ENCODE measurements at regions of chr11 and their contacts with region 1.

Region 1: DNA sequence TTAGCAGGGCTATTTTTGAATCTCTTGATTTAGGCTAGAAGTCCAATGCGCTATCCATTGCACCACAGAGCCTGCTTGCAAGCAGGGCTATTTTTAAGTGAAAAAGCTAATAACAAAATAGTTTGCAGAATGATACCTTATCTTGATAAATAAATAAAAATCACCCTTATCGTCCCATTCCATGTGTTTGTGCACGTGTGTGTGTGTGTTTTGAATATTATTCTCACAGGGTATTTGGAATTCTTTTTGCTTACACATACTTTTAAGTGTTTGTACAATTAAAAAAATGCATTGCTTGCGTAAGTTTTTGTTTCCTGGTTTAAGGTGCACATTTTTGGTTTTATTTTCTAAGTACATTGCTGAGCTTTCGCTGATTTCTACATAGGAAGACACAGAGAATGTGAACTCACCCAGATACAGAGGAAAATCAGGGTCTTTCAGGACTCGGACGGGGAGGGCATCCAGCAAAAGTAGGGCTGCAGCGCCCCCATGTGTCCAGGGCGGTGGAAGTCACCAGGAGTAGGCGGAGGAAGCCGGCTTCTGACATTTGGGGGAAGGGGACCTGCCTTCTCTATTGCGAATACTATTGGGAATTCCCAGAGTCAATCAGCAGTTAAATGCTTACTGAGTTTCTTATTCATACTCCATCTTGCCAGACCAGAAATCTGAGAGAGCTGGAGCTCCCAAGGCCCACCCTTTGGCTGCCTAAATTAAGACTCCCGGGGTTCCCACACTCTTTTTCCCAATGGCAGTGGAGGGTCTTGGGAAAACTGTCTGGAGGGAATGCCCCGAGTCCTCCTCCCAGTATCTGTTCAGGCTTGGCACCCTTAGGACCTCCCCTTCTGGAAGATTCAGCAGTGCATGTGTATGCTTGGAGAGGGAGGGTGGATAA is 27.2 kb downstream of the SLC1A2 start:
- DNase-seq: peak; percentile 76
- H3K4me3 Mint-ChIP-seq: peak overlapping the region; percentile 62
- H3K27ac Mint-ChIP-seq: no peak overlapping the region
- H3K4me1 Mint-ChIP-seq: peaks cover 15% of the 10 kb centered on the region
- H3K27me3 Mint-ChIP-seq: no peaks in the 10 kb centered on the region
- CTCF ChIP-seq: peak; percentile 96

Region 2: DNA sequence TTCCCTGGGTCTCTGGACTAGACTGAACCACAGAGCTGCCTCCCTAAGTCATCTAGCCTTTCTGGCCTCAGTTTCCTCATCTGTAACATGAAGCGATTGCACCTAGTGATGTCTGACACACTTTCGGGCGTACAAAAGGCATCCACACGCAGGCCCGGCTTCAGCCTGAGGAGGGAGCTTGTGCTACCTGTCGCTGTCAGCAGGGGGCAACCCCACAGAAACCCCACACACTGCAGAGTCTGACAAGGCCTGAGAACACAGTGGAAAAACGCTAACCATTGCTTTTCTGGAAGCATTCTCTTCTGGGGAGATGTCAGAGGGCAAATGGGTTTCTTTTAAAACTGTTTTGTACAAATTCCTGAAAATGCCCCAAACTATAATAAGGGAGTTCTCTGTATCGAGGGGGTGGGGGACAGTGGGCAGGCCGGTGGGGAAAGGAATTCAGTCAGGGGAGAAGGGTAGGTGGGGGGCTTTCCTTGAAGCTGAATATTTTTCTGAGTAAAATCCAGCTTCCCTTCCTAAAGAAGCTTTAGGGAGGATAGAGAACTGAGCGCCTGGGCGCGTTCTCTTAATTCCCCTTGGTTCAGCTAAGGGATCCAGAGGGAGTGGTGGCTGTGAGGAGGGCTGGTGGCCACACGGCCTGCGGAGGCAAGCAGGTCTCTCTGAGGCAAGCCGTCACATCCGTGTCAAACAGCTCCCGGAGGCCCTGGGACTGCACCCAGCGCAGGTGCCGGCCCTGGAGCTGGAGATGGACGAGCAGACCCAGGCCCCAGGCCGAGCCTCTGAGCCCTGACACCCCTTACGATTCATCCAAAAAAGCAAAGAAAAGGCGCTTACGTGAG is 879.1 kb before region 1 on chr11:
- CTCF ChIA-PET with region 1: no interaction called
- POLR2A ChIA-PET with region 1: no interaction called
- intact Hi-C with region 1: loop called (anchors 1 kb)
- DNase-seq: peak; percentile 66
- H3K4me3 Mint-ChIP-seq: no peak overlapping the region
- H3K27ac Mint-ChIP-seq: no peak overlapping the region
- H3K4me1 Mint-ChIP-seq: no peaks in the 10 kb centered on the region
- H3K27me3 Mint-ChIP-seq: peaks cover 5% of the 10 kb centered on the region
- CTCF ChIP-seq: peak; percentile 63

Region 3: GRCh38 chr11:34916015-34916842 is 475.9 kb before region 1 on chr11 and contains the starts of genes APIP and PDHX:
- CTCF ChIA-PET with region 1: interaction called, 11 read pairs
- POLR2A ChIA-PET with region 1: interaction called, 13 read pairs
- intact Hi-C with region 1: no loop called
- DNase-seq: peak; percentile 99
- H3K4me3 Mint-ChIP-seq: peak within 1 kb of the TSS; percentile 99
- H3K27ac Mint-ChIP-seq: peak within 1 kb of the TSS; percentile 99
- H3K4me1 Mint-ChIP-seq: peaks cover 19% of the 10 kb centered on the region
- H3K27me3 Mint-ChIP-seq: no peaks in the 10 kb centered on the region
- CTCF ChIP-seq: no peak
- total RNA-seq, gene APIP: 32.4 and 36.9 TPM in 2 replicates
- total RNA-seq, gene PDHX: 35.5 and 35.9 TPM in 2 replicates

Region 4: GRCh38 chr11:34997952-34998528 is 394.1 kb before region 1 on chr11:
- CTCF ChIA-PET with region 1: interaction called, 6 read pairs
- POLR2A ChIA-PET with region 1: interaction called, 3 read pairs
- intact Hi-C with region 1: loop called (anchors 1 kb)
- DNase-seq: peak; percentile 21
- H3K4me3 Mint-ChIP-seq: no peak overlapping the region
- H3K27ac Mint-ChIP-seq: peak overlapping the region; percentile 6
- H3K4me1 Mint-ChIP-seq: peaks cover 6% of the 10 kb centered on the region
- H3K27me3 Mint-ChIP-seq: no peaks in the 10 kb centered on the region
- CTCF ChIP-seq: peak; percentile 44

Region 5: DNA sequence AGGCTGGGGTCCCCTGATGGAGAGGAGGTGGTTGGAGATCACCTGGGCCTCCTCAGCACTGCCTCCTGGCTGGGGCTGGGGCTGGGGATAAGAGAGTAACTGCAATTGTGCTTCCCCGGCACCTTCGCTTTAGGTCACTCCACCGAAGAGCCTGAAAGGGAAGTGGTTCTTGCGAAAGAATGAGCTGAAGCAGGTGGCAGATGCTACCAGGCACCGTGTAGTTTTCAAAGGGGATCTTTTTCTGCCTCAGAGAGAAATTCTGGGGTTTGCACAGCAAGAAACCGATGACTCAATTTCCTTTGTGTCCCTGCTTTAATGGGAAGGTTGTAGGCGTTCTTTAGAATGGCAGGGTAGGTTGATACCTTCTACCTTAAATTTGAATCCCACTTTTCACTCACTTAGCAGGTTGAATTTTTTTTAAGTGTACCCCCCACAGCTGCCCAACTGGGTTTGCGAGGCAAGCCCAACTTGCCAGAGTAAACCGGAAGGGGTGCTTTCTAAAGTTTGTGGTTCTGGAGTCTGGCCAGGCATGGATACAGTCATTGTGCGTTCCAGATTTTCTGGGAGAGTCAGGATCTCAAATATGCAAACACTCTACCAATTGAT is 247.9 kb before region 1 on chr11:
- CTCF ChIA-PET with region 1: interaction called, 5 read pairs
- POLR2A ChIA-PET with region 1: interaction called, 3 read pairs
- intact Hi-C with region 1: loop called (anchors 1 kb)
- DNase-seq: peak; percentile 90
- H3K4me3 Mint-ChIP-seq: peak overlapping the region; percentile 64
- H3K27ac Mint-ChIP-seq: peak overlapping the region; percentile 73
- H3K4me1 Mint-ChIP-seq: peaks cover 57% of the 10 kb centered on the region
- H3K27me3 Mint-ChIP-seq: no peaks in the 10 kb centered on the region
- CTCF ChIP-seq: no peak

Region 6: DNA sequence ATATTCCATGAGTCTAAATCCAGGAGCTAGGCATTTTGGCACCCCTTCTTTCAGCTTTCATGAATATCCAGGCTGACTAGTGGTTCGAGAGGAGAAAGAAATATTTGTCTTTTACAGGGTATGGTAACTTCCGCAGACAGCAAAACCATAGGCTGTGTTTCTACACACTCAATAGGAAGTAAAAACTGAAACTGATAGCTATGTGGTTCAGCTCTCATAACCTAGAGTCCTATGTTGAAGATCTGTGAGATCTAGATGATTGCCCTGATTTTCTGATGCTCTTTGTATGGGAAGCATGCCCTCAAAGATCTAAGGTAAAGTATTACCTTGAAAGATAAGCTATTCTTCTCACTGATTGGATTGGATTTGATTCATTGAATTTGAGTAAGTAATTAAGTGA is 134.9 kb before region 1 on chr11:
- CTCF ChIA-PET with region 1: interaction called, 98 read pairs
- POLR2A ChIA-PET with region 1: interaction called, 10 read pairs
- intact Hi-C with region 1: loop called (anchors 1 kb)
- DNase-seq: no peak
- H3K4me3 Mint-ChIP-seq: no peak overlapping the region
- H3K27ac Mint-ChIP-seq: no peak overlapping the region
- H3K4me1 Mint-ChIP-seq: no peaks in the 10 kb centered on the region
- H3K27me3 Mint-ChIP-seq: no peaks in the 10 kb centered on the region
- CTCF ChIP-seq: no peak

Region 7: GRCh38 chr11:35412285-35412684 is 20.1 kb after region 1 on chr11:
- CTCF ChIA-PET with region 1: interaction called, 13 read pairs
- POLR2A ChIA-PET with region 1: interaction called, 3 read pairs
- intact Hi-C with region 1: no loop called
- DNase-seq: peak; percentile 17
- H3K4me3 Mint-ChIP-seq: no peak overlapping the region
- H3K27ac Mint-ChIP-seq: no peak overlapping the region
- H3K4me1 Mint-ChIP-seq: no peaks in the 10 kb centered on the region
- H3K27me3 Mint-ChIP-seq: peaks cover 61% of the 10 kb centered on the region
- CTCF ChIP-seq: peak; percentile 21

Region 8: GRCh38 chr11:35511666-35512065 is 119.5 kb after region 1 on chr11:
- CTCF ChIA-PET with region 1: no interaction called
- POLR2A ChIA-PET with region 1: no interaction called
- intact Hi-C with region 1: no loop called
- DNase-seq: no peak
- H3K4me3 Mint-ChIP-seq: no peak overlapping the region
- H3K27ac Mint-ChIP-seq: no peak overlapping the region
- H3K4me1 Mint-ChIP-seq: peaks cover 6% of the 10 kb centered on the region
- H3K27me3 Mint-ChIP-seq: no peaks in the 10 kb centered on the region
- CTCF ChIP-seq: no peak

Region 9: GRCh38 chr11:35641171-35641897 is 249.2 kb after region 1 on chr11:
- CTCF ChIA-PET with region 1: no interaction called
- POLR2A ChIA-PET with region 1: no interaction called
- intact Hi-C with region 1: no loop called
- DNase-seq: no peak
- H3K4me3 Mint-ChIP-seq: no peak overlapping the region
- H3K27ac Mint-ChIP-seq: no peak overlapping the region
- H3K4me1 Mint-ChIP-seq: no peaks in the 10 kb centered on the region
- H3K27me3 Mint-ChIP-seq: no peaks in the 10 kb centered on the region
- CTCF ChIP-seq: no peak